Activated B cell treated with CpG ODN at 0.5 μM for 24 hours (primary cell): ENCODE measurements at regions of chr20 and their contacts with region 1.

Region 1: GRCh38 chr20:46349035-46349741 is 40.9 kb upstream of the CDH22 start:
- DNase-seq: peak; percentile 40
- ATAC-seq: no peak
- H3K4me3 Mint-ChIP-seq: no peak overlapping the region
- H3K27ac Mint-ChIP-seq: no peak overlapping the region
- H3K4me1 Mint-ChIP-seq: peaks cover 28% of the 10 kb centered on the region
- H3K27me3 Mint-ChIP-seq: no peaks in the 10 kb centered on the region
- CTCF ChIP-seq: no peak

Region 2: DNA sequence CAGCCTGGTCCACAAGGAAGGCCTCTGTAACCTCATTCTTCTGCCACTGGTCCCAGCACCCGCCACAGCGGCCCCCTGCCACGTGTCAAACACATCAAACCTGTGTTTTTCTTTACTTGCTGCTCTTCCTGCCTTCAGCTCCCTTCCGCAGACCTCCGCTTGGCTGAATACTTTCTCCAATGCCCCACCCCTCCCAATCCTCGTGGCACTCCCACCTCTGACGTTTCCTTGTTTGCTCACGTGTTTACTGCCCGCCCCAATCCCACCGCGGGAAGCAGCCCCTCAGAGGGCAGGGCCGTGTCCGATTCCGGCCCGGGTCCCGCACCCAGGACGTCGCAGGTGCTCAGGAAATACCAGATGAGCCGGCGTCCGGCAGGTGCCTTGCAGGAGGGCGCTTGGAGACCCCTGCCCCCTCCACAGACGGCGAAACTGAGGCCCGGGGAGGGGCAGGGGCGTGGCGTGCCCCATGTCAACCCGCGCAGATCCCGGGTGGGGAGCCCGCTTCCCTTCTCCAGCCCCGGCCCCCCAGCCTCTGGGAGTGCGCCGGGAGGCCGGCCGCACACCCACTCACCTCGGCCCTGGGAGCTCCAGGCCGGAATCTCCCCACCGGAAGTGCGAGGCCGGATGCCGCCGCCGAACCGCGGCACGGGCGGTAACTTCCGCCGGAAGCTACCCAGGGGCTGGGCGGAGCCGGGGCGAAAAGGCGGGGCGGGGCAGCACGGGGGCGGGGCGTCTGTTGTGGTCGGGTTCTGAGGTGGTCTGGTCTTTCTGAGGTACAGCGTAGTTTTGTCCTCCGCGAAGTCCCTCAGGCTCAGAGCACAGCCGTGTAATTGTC is 14.8 kb after region 1 on chr20:
- CTCF ChIA-PET with region 1: interaction called, 14 read pairs
- POLR2A ChIA-PET with region 1: interaction called, 23 read pairs
- intact Hi-C with region 1: loop called (anchors 1 kb)
- DNase-seq: peak; percentile 84
- ATAC-seq: peak; percentile 79
- H3K4me3 Mint-ChIP-seq: peak overlapping the region; percentile 93
- H3K27ac Mint-ChIP-seq: peak overlapping the region; percentile 90
- H3K4me1 Mint-ChIP-seq: peaks cover 54% of the 10 kb centered on the region
- H3K27me3 Mint-ChIP-seq: no peaks in the 10 kb centered on the region
- CTCF ChIP-seq: no peak

Region 3: GRCh38 chr20:46374383-46374782 is 25.2 kb after region 1 on chr20:
- CTCF ChIA-PET with region 1: no interaction called
- POLR2A ChIA-PET with region 1: no interaction called
- intact Hi-C with region 1: no loop called
- DNase-seq: no peak
- ATAC-seq: no peak
- H3K4me3 Mint-ChIP-seq: no peak overlapping the region
- H3K27ac Mint-ChIP-seq: no peak overlapping the region
- H3K4me1 Mint-ChIP-seq: no peaks in the 10 kb centered on the region
- H3K27me3 Mint-ChIP-seq: no peaks in the 10 kb centered on the region
- CTCF ChIP-seq: no peak

Region 4: GRCh38 chr20:46399401-46399800 is 50.2 kb after region 1 on chr20:
- CTCF ChIA-PET with region 1: no interaction called
- POLR2A ChIA-PET with region 1: no interaction called
- intact Hi-C with region 1: no loop called
- DNase-seq: no peak
- ATAC-seq: no peak
- H3K4me3 Mint-ChIP-seq: no peak overlapping the region
- H3K27ac Mint-ChIP-seq: no peak overlapping the region
- H3K4me1 Mint-ChIP-seq: peaks cover 53% of the 10 kb centered on the region
- H3K27me3 Mint-ChIP-seq: no peaks in the 10 kb centered on the region
- CTCF ChIP-seq: no peak

Region 5: GRCh38 chr20:46458866-46459750 is 109.9 kb after region 1 on chr20:
- CTCF ChIA-PET with region 1: no interaction called
- POLR2A ChIA-PET with region 1: no interaction called
- intact Hi-C with region 1: no loop called
- DNase-seq: no peak
- ATAC-seq: no peak
- H3K4me3 Mint-ChIP-seq: no peak overlapping the region
- H3K27ac Mint-ChIP-seq: no peak overlapping the region
- H3K4me1 Mint-ChIP-seq: peaks cover 5% of the 10 kb centered on the region
- H3K27me3 Mint-ChIP-seq: peaks cover 32% of the 10 kb centered on the region
- CTCF ChIP-seq: no peak

Region 6: DNA sequence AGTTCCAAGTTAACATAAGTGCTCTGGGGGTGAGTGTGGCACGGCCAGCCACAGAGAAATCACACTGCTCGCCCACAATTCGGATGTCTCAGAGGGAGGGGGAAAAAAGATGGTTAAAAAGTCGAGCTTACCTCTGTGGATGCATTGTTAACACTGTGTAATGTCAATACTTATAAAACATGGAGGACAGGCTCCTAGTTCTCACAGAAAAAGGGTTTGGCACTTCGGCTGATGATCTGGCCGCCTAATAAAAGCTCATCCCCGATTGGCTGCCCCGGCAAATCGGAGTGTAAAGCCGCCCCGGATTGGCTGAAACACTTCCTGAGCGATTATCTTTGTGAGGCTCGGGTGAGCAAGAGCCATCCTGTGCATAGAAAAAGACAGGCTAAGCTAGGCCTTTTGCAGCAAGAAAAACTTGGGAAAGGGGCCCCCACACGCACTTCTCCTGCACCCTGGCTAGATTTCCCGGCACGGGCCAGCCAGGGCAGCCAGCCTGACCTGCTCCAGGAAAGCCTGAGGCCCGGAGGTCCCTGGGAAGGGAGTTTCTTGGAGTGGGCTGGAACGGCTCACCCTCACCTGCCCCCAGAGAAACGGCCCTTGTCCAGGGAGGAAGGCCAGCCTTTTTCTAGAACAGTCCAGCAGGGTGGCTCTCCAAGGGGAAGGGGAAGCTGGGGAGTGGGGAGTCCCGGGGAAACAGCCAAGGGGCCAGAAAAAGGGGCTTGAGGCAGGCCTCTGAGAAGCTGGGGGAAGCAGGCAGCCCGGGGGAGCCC is 1007.5 kb after region 1 on chr20 and contains the start of gene ZMYND8:
- CTCF ChIA-PET with region 1: no interaction called
- POLR2A ChIA-PET with region 1: no interaction called
- intact Hi-C with region 1: no loop called
- DNase-seq: peak; percentile 96
- ATAC-seq: peak; percentile 81
- H3K4me3 Mint-ChIP-seq: no peak within 1 kb of the TSS
- H3K27ac Mint-ChIP-seq: no peak within 1 kb of the TSS
- H3K4me1 Mint-ChIP-seq: peaks cover 55% of the 10 kb centered on the region
- H3K27me3 Mint-ChIP-seq: no peaks in the 10 kb centered on the region
- CTCF ChIP-seq: no peak
- total RNA-seq, gene ZMYND8: 42.6 and 44.7 TPM in 2 replicates